ENCODE measurements at regions of chr12 and their contacts with region 1.

Region 1: GRCh38 chr12:121483949-121484348 is 84.0 kb downstream of the RNF34 start:
- DNase-seq: no peak
- CTCF ChIP-seq: no peak

Region 2: GRCh38 chr12:121423682-121424623 is 60.0 kb before region 1 on chr12:
- CTCF ChIA-PET with region 1: no interaction called
- POLR2A ChIA-PET with region 1: no interaction called
- DNase-seq: no peak
- CTCF ChIP-seq: no peak

Region 3: DNA sequence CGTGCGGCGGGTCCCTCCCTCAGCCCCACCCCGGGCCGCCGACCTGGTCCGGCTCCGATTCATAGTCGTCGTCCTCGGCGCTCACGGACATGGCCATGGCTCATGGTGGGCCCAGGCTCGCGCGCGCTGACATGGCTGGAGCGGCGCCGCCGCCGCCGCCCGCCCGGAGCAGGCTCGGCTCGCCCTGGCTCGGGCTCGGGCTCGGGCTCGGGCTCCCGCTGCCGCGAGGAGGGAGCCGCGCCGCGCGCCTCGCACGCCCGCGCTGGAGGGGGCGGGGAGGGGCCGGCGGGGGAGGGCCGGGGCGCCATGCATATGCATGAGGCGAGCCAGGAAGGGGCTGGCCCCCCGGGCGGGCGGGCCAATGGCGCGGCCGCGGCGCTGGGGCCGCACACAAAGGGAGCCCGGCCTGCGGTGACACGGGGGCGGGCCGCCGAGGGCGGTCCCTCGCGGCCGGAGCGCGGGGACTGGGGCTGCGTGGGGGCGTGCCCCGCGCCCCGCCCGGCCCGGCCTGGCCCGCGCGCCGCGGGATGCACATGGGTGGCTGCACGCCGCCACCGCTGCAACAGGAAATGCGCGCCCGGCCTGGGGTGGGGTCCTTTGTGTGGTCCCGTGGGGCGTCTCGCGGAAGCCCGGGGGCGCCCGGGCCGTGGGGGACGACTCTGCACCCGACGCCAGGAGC is 16.7 kb before region 1 on chr12:
- CTCF ChIA-PET with region 1: interaction called, 15 read pairs
- POLR2A ChIA-PET with region 1: no interaction called
- DNase-seq: peak; percentile 98
- CTCF ChIP-seq: no peak

Measured in GM10248 (cell line).